Ascending aorta (tissue), 2 donors: ENCODE measurements at regions of chr13 and their contacts with region 1.

Region 1: DNA sequence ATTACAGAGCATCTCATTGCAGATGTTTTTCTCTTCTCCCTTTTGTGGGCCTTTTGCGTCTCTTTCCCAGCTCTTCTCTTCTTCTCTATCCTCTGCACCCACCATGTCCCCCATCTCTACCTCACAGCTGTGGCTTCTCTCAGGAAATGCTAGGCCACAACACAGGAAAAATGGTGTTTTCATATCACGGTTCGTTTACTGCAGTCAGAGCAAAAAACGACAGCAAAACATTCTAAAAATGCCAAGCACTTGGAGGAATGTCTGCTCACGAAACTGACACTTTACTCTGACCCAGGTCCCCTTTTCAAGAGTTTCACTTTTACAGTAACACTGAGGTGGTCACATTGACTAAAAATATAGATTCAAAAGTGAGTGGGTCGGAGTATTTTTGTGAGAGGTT is 152.2 kb downstream of the DCT start:
- DNase-seq: no peak
- H3K4me3 ChIP-seq: no peak overlapping the region
- H3K27ac ChIP-seq: no peak overlapping the region
- H3K4me1 ChIP-seq: peaks cover 0 to 18% of the 10 kb centered on the region in 2 donors
- H3K27me3 ChIP-seq: no peaks in the 10 kb centered on the region
- CTCF ChIP-seq: no peak

Region 2: DNA sequence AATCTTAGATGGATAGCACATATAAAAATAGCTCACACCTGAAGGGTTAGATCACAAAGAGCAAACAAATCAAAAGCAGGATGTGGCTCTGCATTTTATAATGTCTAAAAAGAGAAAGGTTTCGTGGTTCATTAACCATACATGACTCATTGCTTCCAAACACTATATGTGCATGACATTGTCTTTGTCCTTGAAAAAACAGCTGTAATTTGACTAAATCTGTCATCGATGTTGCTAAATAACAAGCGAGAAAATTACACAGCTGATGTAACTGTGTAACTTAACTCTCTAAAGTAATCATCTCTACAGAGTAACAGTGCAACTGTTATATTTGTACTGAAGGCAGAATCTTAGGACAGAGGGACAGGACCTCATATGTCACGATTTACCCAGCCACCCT is 1483.8 kb before region 1 on chr13:
- intact Hi-C with region 1: loop called (anchors 10 kb)
- DNase-seq: no peak
- H3K4me3 ChIP-seq: no peak overlapping the region
- H3K27ac ChIP-seq: no peak overlapping the region
- H3K4me1 ChIP-seq: peaks cover 0 to 20% of the 10 kb centered on the region in 2 donors
- H3K27me3 ChIP-seq: no peaks in the 10 kb centered on the region
- CTCF ChIP-seq: no peak

Region 3: DNA sequence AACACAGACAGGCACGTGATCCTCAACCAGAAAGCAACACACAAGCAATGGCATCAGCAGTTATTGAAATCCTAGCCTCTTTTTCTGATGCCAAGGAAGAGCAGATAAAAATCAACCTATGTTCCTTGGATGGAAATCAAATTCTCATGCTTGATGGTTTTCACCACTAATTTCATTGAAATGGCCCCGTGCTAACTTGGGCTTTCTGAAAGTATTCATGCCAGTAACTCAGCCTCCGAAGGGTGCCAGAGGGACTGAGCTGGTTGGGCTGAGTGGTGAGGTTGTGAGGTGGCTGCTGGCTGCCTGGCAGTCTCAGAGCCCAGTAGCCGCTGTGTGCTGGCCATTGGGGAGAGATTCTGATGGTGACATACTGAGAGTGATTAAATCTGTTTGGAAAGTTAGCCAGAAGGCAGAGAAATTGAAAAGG is 157.2 kb before region 1 on chr13:
- intact Hi-C with region 1: loop called (anchors 5 kb)
- DNase-seq: peak in 1 of 2 donors; percentile 79
- H3K4me3 ChIP-seq: no peak overlapping the region
- H3K27ac ChIP-seq: peak overlapping the region in 1 of 2 donors; percentile 55
- H3K4me1 ChIP-seq: peaks cover 0 to 9% of the 10 kb centered on the region in 2 donors
- H3K27me3 ChIP-seq: no peaks in the 10 kb centered on the region
- CTCF ChIP-seq: no peak

Region 4: GRCh38 chr13:94345374-94346195 is 18.3 kb after region 1 on chr13:
- intact Hi-C with region 1: loop called (anchors 2 kb)
- DNase-seq: no peak
- H3K4me3 ChIP-seq: no peak overlapping the region
- H3K27ac ChIP-seq: no peak overlapping the region
- H3K4me1 ChIP-seq: peaks cover 0 to 7% of the 10 kb centered on the region in 2 donors
- H3K27me3 ChIP-seq: no peaks in the 10 kb centered on the region
- CTCF ChIP-seq: peak in 1 of 3 experiments; percentile 3

Region 5: DNA sequence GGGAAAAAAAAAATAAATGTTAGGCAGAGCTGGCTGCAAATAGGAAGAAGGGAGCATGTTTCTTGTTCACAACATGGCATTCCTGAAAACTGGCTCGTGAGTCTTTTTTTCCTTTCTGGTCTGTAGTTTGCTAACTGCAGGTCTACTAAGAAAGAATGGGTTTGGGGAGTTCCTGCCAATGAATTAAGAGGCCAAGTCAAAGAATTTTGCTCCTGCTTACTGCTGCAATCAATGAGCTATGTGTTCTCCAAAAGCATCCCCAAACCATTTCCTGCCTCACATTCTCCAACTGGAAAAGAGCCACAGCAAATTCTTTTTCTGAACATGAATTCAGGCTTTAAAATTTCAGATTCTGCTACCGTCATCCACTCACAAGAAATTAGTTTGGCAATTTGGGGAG is 63.6 kb after region 1 on chr13:
- intact Hi-C with region 1: no loop called
- DNase-seq: no peak
- H3K4me3 ChIP-seq: no peak overlapping the region
- H3K27ac ChIP-seq: no peak overlapping the region
- H3K4me1 ChIP-seq: no peaks in the 10 kb centered on the region
- H3K27me3 ChIP-seq: no peaks in the 10 kb centered on the region
- CTCF ChIP-seq: no peak